ENCODE measurements at regions of chr18 and their contacts with region 1.

Region 1: DNA sequence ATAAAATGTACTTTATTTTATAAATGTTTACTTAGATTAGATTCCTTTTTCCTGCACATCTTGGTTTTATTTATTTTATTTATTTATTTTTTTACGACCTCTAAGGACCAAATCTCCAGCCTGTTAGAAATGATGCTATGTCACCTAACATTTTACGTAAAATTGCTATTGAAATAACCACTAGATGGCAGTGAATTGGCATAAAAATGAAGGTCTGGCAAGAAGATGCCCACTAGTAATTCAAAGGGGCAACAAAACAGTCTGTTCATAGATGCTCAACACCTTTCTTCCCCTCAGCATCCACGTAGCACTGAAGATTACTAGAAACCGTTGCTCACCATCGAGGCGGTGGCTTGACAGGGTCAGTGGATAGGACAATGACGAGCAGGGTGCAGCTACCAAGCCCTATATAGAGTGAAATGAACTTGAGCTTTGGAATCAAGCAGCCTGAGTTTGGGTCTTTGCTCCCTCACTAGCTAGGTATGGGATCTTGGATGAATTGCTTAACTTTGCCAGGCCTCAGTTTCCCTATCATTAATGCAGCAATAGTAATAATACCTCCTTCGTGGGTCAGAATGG is 128.7 kb upstream of the L3MBTL4 start:
- DNase-seq: no peak
- ATAC-seq: no peak
- H3K4me3 ChIP-seq: no peak overlapping the region
- H3K27ac ChIP-seq: no peak overlapping the region
- H3K4me1 ChIP-seq: peaks cover 12% of the 10 kb centered on the region
- H3K27me3 ChIP-seq: no peaks in the 10 kb centered on the region
- CTCF ChIP-seq: peak; percentile 14 to 69 (median 64)
- POLR2A ChIP-seq: no peak

Region 2: DNA sequence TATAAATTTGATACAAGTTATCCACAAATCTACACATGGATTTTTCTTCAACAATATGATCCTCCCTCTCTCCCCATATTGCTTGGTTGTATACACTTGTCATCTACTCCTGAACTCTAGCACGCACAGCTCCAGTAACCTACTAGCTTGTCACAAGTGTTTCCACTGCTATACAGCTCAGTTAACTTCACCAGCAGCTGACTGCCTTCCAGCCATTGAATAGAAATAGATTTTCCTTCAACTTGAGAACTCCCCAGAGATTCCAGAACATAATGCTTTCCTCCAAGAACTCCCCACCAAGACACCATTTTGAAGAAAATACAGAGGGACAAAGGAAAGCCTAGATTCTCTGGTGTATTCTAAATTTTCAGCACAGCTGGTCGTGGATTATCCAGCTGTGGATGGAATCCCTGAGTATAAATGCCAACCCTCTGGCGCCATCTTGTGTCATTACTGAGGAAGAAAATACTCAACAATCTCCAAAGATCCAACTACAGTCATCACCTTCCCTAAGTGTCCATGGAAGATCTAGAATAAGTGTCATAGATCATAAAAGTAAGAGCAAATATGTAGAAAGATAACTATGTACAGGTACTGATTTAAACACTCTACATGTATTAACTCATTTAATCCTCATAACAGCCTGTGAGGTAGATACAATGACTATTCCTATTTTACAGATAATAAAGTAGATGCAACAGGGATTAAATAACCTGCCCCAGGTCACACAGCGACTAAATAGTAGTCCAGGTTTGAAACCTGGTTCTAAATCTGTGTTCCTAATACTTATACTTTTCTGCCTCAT is 342.8 kb after region 1 on chr18:
- intact Hi-C with region 1: loop called (anchors 5 kb)
- DNase-seq: peak; percentile 51 to 62 (median 54)
- ATAC-seq: peak; percentile 75
- H3K4me3 ChIP-seq: no peak overlapping the region
- H3K27ac ChIP-seq: no peak overlapping the region
- H3K4me1 ChIP-seq: no peaks in the 10 kb centered on the region
- H3K27me3 ChIP-seq: no peaks in the 10 kb centered on the region
- CTCF ChIP-seq: peak; percentile 51 to 81 (median 74)
- POLR2A ChIP-seq: no peak

Region 3: GRCh38 chr18:7535386-7535785 is 992.0 kb after region 1 on chr18:
- intact Hi-C with region 1: no loop called
- DNase-seq: no peak
- ATAC-seq: no peak
- H3K4me3 ChIP-seq: no peak overlapping the region
- H3K27ac ChIP-seq: no peak overlapping the region
- H3K4me1 ChIP-seq: no peaks in the 10 kb centered on the region
- H3K27me3 ChIP-seq: no peaks in the 10 kb centered on the region
- CTCF ChIP-seq: no peak
- POLR2A ChIP-seq: no peak